SK-N-SH (cell line): ENCODE measurements at regions of chr18 and their contacts with region 1.

Region 1: GRCh38 chr18:616380-616995 is 19.7 kb downstream of the CLUL1 start:
- DNase-seq: peak; percentile 44
- H3K4me3 ChIP-seq: no peak overlapping the region
- H3K27ac ChIP-seq: no peak overlapping the region
- H3K4me1 ChIP-seq: no peaks in the 10 kb centered on the region; a peak in 1 of 4 replicates
- H3K27me3 ChIP-seq: peaks cover 16% of the 10 kb centered on the region; the same call in 1 of the 2 replicates
- CTCF ChIP-seq: peak; percentile 91
- EP300 ChIP-seq: no peak
- RAD21 ChIP-seq: peak; percentile 92

Region 2: DNA sequence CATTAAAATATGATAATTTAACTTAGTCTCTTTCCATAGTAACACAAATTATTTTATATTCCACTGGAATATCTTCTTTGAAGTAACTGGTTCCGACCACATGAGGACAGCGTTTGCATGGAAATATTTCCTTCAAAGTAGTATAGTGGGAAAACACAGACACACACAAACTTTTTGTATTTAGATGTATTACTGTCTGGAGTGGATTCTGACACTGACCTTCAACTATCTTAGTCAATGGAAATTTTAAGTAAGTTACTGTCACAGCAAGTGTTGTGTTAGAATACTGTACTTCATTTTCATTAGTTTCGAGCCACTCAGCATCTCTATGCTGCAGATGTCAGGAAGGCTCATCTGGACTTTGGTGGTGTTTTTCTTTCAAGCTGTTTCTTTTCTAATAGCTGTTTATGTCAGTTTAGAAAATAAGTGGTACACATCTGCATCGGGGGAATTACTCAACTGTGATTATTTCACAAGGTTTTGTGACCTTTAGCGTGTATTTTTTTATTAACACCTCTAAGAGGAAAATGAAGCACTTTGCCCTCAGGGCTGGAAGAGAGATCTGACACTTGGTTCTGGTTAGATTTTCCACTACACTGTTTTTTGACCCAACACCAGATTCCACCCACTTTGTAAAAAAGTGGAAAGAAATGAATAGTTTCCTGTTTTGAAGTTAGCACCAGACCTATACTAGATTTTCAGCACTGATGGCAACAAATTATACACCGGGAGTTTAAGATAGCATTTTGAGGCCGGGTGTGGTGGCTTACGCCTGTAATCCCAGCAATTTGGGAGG is 329.8 kb before region 1 on chr18:
- CTCF ChIA-PET with region 1: interaction called, 24 read pairs
- POLR2A ChIA-PET with region 1: no interaction called
- DNase-seq: peak; percentile 21
- H3K4me3 ChIP-seq: no peak overlapping the region
- H3K27ac ChIP-seq: no peak overlapping the region
- H3K4me1 ChIP-seq: no peaks in the 10 kb centered on the region; a peak in 1 of 4 replicates
- H3K27me3 ChIP-seq: no peaks in the 10 kb centered on the region; the same call in 1 of the 2 replicates
- CTCF ChIP-seq: peak; percentile 88
- EP300 ChIP-seq: no peak
- RAD21 ChIP-seq: peak; percentile 89

Region 3: DNA sequence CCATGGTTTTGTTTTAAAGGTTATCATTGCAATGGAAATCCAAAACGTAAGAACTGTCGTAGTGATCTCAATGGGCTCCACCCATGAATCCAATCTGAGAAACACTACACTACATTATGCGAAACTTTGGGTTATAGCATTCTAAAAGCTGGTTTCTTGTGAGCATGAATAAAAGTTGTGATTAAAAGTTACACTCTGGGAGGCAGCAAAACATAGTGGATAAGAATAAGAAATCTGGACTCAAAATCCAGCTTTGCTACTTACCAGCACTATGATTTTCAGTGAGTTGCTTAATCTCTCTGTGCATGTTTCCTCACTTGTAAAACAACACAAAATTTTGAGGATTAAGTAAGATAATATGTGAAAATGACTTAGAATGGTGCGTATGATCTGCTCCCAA is 323.0 kb before region 1 on chr18:
- CTCF ChIA-PET with region 1: interaction called, 18 read pairs
- POLR2A ChIA-PET with region 1: no interaction called
- DNase-seq: no peak
- H3K4me3 ChIP-seq: no peak overlapping the region
- H3K27ac ChIP-seq: no peak overlapping the region
- H3K4me1 ChIP-seq: no peaks in the 10 kb centered on the region
- H3K27me3 ChIP-seq: no peaks in the 10 kb centered on the region
- CTCF ChIP-seq: peak; percentile 16; the same call in 1 of the 2 replicates
- EP300 ChIP-seq: no peak
- RAD21 ChIP-seq: peak; percentile 58

Region 4: DNA sequence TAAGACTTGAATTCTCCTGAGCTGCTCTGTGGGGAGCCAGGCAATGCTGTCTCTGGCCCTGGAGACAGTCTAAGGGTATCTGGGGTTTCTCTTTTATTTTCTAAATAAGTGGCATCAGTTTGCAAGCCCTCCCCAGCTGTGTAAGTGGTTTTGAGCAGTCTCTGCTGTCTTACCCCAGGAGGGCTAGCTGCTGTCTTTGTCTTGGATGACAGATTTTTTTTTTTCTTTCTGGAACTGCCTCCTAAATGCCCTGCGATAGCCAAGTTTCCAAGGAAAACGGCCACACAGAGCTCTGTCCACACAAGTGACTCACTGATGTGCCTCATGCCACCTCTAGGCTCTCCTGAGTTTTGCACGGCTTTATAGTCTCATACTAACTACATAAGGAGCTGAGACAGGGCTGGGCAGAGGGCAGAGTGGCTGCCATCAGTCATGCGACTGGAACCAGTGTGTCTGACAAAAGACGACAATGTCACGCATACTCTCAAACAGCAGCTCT is 311.4 kb before region 1 on chr18:
- CTCF ChIA-PET with region 1: interaction called, 10 read pairs
- POLR2A ChIA-PET with region 1: interaction called, 4 read pairs
- DNase-seq: no peak
- H3K4me3 ChIP-seq: no peak overlapping the region
- H3K27ac ChIP-seq: no peak overlapping the region
- H3K4me1 ChIP-seq: peaks cover 0 to 10% of the 10 kb centered on the region in 2 experiments; a peak in 1 of 4 replicates
- H3K27me3 ChIP-seq: no peaks in the 10 kb centered on the region
- CTCF ChIP-seq: no peak
- EP300 ChIP-seq: no peak
- RAD21 ChIP-seq: no peak